Right cardiac atrium (tissue), 5 donors: ENCODE measurements at regions of chr7 and their contacts with region 1.

Region 1: DNA sequence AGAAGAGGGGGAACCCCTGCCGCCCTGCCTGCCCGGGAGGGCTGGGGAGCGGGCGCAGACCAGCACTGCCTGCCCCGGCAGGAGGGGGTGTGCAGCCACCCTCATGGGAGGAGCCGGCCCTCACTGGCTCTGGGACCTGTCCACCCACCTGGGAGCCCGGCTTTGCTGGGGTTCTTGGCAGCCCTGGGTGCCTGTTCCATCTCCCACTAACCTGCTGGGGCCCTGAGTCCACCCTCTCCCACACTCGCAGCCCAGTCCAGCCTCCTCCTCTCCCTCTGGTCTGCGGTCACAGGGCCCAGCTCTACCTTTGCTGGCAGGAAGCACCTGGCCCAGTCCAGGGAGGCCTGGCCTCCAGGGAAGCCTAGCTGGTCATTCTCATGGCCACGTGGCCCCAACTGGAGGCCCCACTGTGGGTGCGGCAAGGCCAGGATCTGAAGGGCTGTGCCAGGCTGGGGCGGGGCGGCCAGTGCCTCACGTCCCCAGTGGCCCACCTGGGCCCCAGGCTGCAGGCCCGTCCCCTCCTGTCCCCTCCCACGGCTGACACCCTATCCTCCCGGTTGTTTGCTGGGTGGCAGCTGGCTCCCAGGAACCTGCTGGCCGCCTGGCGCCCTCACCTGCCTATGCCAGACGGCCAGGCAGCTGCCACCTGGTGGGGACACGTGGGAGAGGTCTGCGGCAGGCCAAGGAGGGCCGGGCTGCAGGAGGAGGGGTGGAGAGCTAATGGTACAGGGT is at the start of gene TMEM184A:
- DNase-seq: peak in 2 of 3 donors; percentile 62 to 73
- ATAC-seq: peak; percentile 11 to 30
- H3K4me3 ChIP-seq: no peak within 1 kb of the TSS
- H3K27ac ChIP-seq: no peak within 1 kb of the TSS
- H3K4me1 ChIP-seq: no peaks in the 10 kb centered on the region
- H3K27me3 ChIP-seq: no peaks in the 10 kb centered on the region
- total RNA-seq, gene TMEM184A: 0.26 to 0.62 (median 0.49) TPM in 3 of 4 donors, not detected in the other

Region 2: GRCh38 chr7:1503816-1504775 is 51.9 kb before region 1 on chr7 and contains the start of gene INTS1:
- intact Hi-C with region 1: loop called in 2 of 4 experiments (anchors 2 to 10 kb)
- DNase-seq: peak; percentile 92 to 96 (median 96)
- ATAC-seq: peak; percentile 89 to 94
- H3K4me3 ChIP-seq: peak within 1 kb of the TSS; percentile 74
- H3K27ac ChIP-seq: no peak within 1 kb of the TSS
- H3K4me1 ChIP-seq: peaks cover 7% of the 10 kb centered on the region
- H3K27me3 ChIP-seq: no peaks in the 10 kb centered on the region
- total RNA-seq, gene INTS1: 30.6 to 48.3 (median 46.3) TPM

Region 3: DNA sequence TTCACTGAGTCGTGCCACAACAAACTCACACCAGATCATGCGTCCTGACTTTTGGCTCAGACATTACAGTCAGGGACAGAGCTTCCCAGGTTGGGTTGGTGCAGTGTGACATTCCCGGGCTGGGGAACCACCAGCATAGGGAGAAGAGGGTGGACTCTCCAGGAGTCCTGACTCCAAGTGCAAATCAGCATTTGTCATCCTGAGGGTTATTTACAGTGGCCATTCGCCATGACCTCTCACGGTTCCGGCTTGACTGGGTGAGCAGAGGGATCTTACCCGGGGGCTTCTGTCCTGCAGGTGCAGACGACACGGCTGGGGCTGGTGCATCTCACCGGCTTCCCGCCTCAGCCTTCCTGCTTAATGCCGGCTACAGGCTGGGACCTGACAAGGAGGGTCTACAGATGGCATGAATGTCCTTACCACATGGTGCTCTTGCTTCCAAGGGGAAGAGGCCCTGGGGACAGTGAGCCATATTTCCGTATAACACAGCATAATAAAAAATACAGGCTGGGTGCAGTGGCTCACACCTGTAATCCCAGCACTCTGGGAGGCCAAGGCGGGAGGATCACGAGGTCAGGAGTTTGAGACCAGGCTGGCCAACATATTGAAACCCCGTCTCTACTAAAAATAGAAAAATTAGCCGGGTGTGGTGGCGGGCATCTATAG is 39.3 kb before region 1 on chr7:
- intact Hi-C with region 1: no loop called
- DNase-seq: peak in 1 of 3 donors; percentile 14
- ATAC-seq: no peak
- H3K4me3 ChIP-seq: no peak overlapping the region
- H3K27ac ChIP-seq: no peak overlapping the region
- H3K4me1 ChIP-seq: peaks cover 3% of the 10 kb centered on the region
- H3K27me3 ChIP-seq: no peaks in the 10 kb centered on the region

Region 4: DNA sequence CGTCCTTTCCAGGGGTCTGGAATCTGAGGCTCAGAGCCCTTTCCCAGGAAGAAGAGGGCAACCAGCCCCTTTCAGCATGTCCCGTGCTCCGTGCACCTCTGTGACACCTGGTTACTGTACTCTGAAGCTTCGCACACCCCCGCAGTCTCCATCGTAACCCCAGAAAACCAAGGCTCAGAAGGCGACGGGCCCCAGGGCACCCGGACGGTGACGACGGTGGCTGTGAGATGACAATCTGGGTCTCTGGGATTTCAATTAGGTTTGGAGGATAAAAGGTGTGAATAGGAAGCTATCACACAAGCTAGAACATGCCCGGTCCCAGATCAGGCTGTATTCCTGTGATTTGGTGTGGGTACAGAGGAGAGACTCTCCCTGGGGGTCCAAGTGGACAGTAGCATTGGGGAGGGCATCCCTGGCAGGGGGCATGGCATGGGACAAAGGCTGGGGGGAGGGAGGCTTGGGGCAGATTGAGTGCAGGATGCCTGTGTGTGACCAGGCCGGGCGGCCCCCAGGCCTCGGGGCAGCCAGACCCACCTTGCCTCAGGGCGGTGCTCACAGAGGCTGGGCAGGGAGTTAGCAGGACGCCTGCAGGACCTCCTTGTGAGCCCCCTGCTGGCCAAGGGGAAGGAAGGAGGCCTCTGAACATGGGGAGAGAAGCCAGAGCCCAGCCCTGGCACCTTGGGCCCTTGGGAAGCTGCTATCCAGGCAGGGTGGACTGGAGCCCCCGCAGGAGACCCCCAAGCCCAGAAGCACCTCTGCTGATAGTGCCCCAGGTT is 37.3 kb after region 1 on chr7:
- intact Hi-C with region 1: no loop called
- DNase-seq: peak in 2 of 3 donors; percentile 24 to 31
- ATAC-seq: no peak
- H3K4me3 ChIP-seq: no peak overlapping the region
- H3K27ac ChIP-seq: no peak overlapping the region
- H3K4me1 ChIP-seq: no peaks in the 10 kb centered on the region
- H3K27me3 ChIP-seq: no peaks in the 10 kb centered on the region

Region 5: DNA sequence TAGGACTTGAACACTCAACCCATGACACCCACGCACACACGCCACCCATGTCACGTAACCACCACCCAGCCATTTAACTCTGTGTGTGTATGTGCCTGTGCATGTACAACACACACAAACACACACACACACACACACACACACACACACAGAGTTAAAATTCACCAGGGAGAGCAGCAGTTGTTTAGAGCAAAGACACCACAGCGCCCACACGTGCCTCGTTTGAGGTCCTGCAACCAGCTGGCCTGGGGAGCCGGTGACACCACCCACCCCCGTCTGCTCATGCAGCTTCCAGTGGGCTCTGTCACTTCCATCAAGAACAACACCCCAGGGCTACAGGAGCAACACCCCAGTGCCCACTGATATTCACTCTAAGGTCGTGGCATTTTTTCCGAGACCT is 211.5 kb after region 1 on chr7:
- intact Hi-C with region 1: no loop called
- DNase-seq: no peak
- ATAC-seq: peak in 1 of 2 donors; percentile 16
- H3K4me3 ChIP-seq: no peak overlapping the region
- H3K27ac ChIP-seq: no peak overlapping the region
- H3K4me1 ChIP-seq: no peaks in the 10 kb centered on the region
- H3K27me3 ChIP-seq: no peaks in the 10 kb centered on the region